GM18951 (cell line): ENCODE measurements at regions of chr10 and their contacts with region 1.

Region 1: DNA sequence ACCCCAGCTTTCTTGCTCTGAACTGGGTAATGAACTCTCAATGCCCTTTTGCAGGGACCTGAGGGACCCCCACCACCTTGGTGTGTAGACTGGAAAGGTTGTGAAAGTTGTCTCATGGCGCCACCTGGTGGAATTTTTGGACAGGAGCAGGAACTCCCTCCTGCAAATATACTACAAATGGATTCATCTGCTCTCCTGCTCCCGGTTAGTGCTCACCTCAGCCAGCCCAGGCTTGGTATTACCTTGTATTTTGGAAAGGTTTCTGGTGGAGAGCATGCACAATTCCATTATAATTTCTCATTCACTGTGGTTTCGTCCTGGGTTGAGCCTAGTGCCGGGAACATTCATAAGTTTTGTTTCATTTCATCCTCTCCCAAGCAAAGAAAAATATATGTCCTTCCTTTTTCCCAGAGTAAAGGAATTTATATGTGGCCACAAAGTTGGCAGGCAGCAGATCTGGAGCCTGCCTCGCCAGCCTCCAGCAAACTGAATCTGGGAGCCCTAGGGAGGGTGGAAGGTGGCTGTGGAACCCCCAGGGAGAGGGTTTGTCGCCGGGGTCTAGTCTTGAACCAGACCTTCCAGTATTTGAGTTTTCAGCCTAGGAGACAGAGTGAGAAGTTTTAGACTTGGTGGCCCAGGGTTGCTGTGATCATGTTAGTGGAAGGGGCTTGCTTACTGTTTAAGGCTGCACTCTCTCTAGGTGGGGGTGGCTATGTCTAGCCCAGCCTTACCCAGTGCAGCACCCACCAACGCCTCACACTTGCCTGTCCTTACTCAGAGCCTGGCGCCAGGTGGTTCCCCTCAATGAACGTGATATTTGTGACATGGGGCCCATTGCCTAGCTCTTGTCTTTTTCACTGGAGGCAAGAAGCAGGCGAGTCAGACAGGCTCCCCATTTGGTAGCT is 9.5 kb downstream of the FAM241B start:
- POLR2A ChIP-seq: no peak

Region 2: GRCh38 chr10:68938119-68938518 is 701.4 kb before region 1 on chr10:
- in situ Hi-C with region 1: no loop called
- POLR2A ChIP-seq: no peak

Region 3: GRCh38 chr10:69515699-69516259 is 123.8 kb before region 1 on chr10:
- in situ Hi-C with region 1: loop called (anchors 5 kb)
- POLR2A ChIP-seq: no peak

Region 4: DNA sequence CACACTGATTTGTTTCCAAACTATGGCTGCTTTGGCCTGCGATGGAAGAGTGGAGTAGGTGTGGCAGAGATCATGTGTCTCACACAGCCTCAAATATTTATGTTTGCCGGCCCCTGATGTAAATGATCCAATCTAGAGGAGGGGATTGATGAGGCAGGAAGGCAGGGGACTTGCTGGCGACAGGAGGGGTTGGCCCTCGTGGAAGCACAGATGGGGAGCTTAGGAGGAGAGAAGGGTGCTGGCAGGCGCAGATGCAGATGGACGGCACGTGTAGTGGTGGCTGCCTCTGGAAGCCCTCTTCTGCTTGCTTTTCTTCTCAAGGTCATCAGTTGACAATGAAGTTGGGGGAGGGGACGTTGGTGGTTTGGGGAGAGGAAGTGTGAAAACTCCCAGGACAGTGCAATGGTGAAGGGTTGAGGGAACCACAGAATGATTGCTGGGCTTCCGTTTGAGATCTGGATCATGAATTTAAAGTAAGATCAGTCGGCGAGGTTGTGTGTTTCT is 177.6 kb after region 1 on chr10:
- in situ Hi-C with region 1: no loop called
- POLR2A ChIP-seq: no peak